ENCODE measurements at regions of chr5 and their contacts with region 1.

Region 1: DNA sequence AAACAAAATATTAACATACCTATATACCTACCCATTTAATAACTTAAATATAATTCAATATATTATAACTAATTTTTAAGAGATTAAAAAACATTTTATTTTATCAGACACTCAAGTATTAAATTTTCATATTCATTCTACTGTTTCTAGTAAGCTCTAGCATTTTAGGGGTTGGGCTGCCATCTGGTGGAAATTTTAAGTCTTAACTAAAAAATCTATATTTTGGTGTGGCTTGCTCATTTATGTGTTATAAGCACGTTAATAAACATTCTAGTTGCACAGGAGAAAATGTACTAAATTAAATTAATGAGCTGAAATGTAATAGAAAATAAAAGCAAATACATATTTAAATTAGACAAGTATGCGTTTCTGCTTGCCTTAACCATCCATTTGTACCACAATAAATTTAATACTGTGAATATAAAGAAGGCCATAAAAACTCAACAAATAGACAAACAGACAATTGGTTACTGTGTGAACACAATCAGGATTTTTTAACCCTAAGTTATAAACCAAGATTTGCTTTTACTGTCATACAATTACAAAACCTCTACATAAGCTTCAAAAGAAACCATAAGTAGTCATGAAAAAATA is 1728.3 kb upstream of the CDH9 start:
- DNase-seq: peak in 1 of 2 experiments; percentile 34
- H3K4me3 ChIP-seq: no peak overlapping the region
- H3K4me3 Mint-ChIP-seq: no peak overlapping the region
- H3K27ac Mint-ChIP-seq: no peak overlapping the region
- H3K4me1 ChIP-seq: no peaks in the 10 kb centered on the region
- H3K4me1 Mint-ChIP-seq: no peaks in the 10 kb centered on the region
- H3K27me3 ChIP-seq: no peaks in the 10 kb centered on the region
- H3K27me3 Mint-ChIP-seq: no peaks in the 10 kb centered on the region
- CTCF ChIP-seq: peak; percentile 32 to 54

Region 2: GRCh38 chr5:27020973-27021372 is 1745.7 kb before region 1 on chr5:
- CTCF ChIA-PET with region 1: no interaction called
- POLR2A ChIA-PET with region 1: no interaction called
- intact Hi-C with region 1: loop called (anchors 5 kb)
- DNase-seq: peak in 1 of 2 experiments; percentile 3
- H3K4me3 ChIP-seq: no peak overlapping the region
- H3K4me3 Mint-ChIP-seq: no peak overlapping the region
- H3K27ac Mint-ChIP-seq: no peak overlapping the region
- H3K4me1 ChIP-seq: no peaks in the 10 kb centered on the region
- H3K4me1 Mint-ChIP-seq: no peaks in the 10 kb centered on the region
- H3K27me3 ChIP-seq: no peaks in the 10 kb centered on the region
- H3K27me3 Mint-ChIP-seq: no peaks in the 10 kb centered on the region
- CTCF ChIP-seq: no peak

Region 3: DNA sequence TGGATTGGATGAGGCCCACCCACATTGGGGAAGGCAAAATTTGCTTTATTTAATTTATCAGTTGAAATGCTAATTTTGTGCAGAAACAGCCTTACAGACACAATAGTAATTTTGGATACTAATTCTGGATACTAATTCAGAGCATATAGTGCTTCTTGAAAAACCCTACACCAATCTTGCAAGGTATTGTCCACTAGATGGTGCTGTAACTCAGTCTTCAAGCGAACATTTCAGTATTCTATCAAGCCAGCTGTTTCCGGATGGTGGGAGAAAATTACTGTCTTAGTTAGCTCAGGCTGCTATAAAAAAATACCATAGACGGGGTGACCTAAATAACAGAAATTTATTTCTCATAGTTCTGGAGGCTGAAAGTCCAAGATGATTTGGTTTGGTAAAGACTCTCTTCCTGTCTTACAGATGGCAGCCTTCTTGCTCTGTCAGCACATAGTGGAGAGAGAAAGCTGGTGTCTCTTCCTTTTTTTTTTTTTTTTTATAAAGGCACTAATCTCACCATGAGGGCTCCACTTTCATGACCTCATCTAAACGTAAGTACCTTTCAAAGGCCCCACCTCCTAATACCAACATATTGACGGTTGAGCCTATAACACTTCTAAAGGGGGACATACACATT is 421.7 kb before region 1 on chr5:
- CTCF ChIA-PET with region 1: no interaction called
- POLR2A ChIA-PET with region 1: no interaction called
- intact Hi-C with region 1: loop called (anchors 1 kb)
- DNase-seq: peak in 1 of 2 experiments; percentile 38
- H3K4me3 ChIP-seq: no peak overlapping the region
- H3K4me3 Mint-ChIP-seq: no peak overlapping the region
- H3K27ac Mint-ChIP-seq: no peak overlapping the region
- H3K4me1 ChIP-seq: no peaks in the 10 kb centered on the region
- H3K4me1 Mint-ChIP-seq: no peaks in the 10 kb centered on the region
- H3K27me3 ChIP-seq: no peaks in the 10 kb centered on the region
- H3K27me3 Mint-ChIP-seq: no peaks in the 10 kb centered on the region
- CTCF ChIP-seq: peak; percentile 59 to 75

Region 4: GRCh38 chr5:28473531-28474107 is 293.0 kb before region 1 on chr5:
- CTCF ChIA-PET with region 1: no interaction called
- POLR2A ChIA-PET with region 1: no interaction called
- intact Hi-C with region 1: loop called (anchors 1 kb)
- DNase-seq: no peak
- H3K4me3 ChIP-seq: no peak overlapping the region
- H3K4me3 Mint-ChIP-seq: no peak overlapping the region
- H3K27ac Mint-ChIP-seq: no peak overlapping the region
- H3K4me1 ChIP-seq: no peaks in the 10 kb centered on the region
- H3K4me1 Mint-ChIP-seq: no peaks in the 10 kb centered on the region
- H3K27me3 ChIP-seq: no peaks in the 10 kb centered on the region
- H3K27me3 Mint-ChIP-seq: no peaks in the 10 kb centered on the region
- CTCF ChIP-seq: no peak

Region 5: GRCh38 chr5:28823231-28823630 is 56.6 kb after region 1 on chr5:
- CTCF ChIA-PET with region 1: no interaction called
- POLR2A ChIA-PET with region 1: no interaction called
- intact Hi-C with region 1: no loop called
- DNase-seq: no peak
- H3K4me3 ChIP-seq: no peak overlapping the region
- H3K4me3 Mint-ChIP-seq: no peak overlapping the region
- H3K27ac Mint-ChIP-seq: no peak overlapping the region
- H3K4me1 ChIP-seq: no peaks in the 10 kb centered on the region
- H3K4me1 Mint-ChIP-seq: no peaks in the 10 kb centered on the region
- H3K27me3 ChIP-seq: no peaks in the 10 kb centered on the region
- H3K27me3 Mint-ChIP-seq: no peaks in the 10 kb centered on the region
- CTCF ChIP-seq: no peak

Region 6: DNA sequence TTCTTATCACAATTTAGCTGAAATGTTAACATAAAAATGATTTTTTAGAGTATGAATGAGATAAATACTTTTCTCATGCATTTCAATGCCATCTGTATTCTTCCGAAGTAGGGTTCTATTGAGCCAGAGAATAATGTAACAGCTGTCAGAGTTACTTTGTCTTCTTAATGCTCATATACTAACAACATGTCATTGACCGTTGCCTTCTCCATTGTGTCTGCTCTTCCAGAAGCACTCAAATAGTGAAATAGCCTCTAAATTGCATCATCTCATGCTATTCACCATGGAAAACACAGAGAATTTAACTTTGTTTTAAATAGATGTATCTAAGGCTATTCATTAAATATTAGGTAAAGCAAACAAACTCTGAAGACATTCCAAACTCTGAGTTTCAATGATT is 147.6 kb after region 1 on chr5:
- CTCF ChIA-PET with region 1: no interaction called
- POLR2A ChIA-PET with region 1: no interaction called
- intact Hi-C with region 1: no loop called
- DNase-seq: no peak
- H3K4me3 ChIP-seq: no peak overlapping the region
- H3K4me3 Mint-ChIP-seq: no peak overlapping the region
- H3K27ac Mint-ChIP-seq: no peak overlapping the region
- H3K4me1 ChIP-seq: no peaks in the 10 kb centered on the region
- H3K4me1 Mint-ChIP-seq: no peaks in the 10 kb centered on the region
- H3K27me3 ChIP-seq: no peaks in the 10 kb centered on the region
- H3K27me3 Mint-ChIP-seq: no peaks in the 10 kb centered on the region
- CTCF ChIP-seq: no peak

Region 7: GRCh38 chr5:29208026-29208425 is 441.4 kb after region 1 on chr5:
- CTCF ChIA-PET with region 1: no interaction called
- POLR2A ChIA-PET with region 1: no interaction called
- intact Hi-C with region 1: no loop called
- DNase-seq: no peak
- H3K4me3 ChIP-seq: no peak overlapping the region
- H3K4me3 Mint-ChIP-seq: no peak overlapping the region
- H3K27ac Mint-ChIP-seq: no peak overlapping the region
- H3K4me1 ChIP-seq: no peaks in the 10 kb centered on the region
- H3K4me1 Mint-ChIP-seq: peaks cover 2% of the 10 kb centered on the region
- H3K27me3 ChIP-seq: no peaks in the 10 kb centered on the region
- H3K27me3 Mint-ChIP-seq: no peaks in the 10 kb centered on the region
- CTCF ChIP-seq: no peak

Measured in Caco-2 (cell line).